CD4-positive, alpha-beta T cell (primary cell): ENCODE measurements at regions of chr20 and their contacts with region 1.

Region 1: DNA sequence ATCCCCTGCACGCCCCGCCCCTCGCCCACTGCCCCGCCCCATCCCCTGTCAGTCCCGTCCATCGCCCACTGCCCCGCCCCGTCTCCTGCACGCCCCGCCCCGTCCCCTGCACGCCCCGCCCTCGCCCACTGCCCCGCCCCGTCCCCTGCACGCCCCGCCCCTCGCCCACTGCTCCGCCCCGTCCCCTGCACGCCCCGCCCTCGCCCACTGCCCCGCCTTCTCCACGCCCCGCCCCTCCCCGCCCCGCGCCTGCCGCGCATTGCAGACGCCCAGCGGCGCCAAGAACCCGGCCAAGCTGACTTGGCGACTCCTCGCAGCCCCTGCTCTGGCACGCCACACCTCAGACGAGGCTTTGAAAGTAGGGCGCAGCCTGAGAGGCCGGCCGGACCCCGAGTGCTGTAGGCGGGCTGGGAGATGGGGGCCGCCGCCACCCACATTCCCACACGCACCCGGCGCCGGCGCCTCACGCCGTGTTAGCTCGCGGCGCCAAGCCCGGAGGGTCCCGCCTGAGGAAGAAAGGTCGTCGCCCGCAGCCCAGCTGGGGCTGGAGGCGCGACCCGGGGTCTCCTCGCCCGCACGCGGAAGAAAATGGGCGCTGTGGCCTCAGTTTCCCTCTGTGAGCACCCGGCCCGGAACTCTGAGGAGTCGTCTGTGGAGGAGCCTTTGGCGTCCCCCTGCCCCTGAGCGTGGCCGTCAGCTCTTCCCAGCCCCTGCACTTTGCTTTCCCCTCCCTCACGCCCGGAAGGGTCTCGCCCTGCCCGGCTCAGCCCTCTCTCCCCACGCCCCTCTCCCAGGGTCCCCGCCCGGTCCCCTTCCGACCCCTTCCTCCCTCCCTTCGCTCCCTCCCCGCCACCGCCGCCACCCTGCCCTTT is at the start of gene RAD21L1:
- DNase-seq: peak; percentile 73 to 92 (median 80)
- ATAC-seq: peak; percentile 80
- H3K4me3 ChIP-seq: peak within 1 kb of the TSS; percentile 77
- H3K4me3 Mint-ChIP-seq: peak within 1 kb of the TSS; percentile 92
- H3K27ac ChIP-seq: peak within 1 kb of the TSS in 1 of 2 donors; percentile 22
- H3K27ac Mint-ChIP-seq: peak within 1 kb of the TSS; percentile 53
- H3K4me1 ChIP-seq: peaks cover 18% of the 10 kb centered on the region
- H3K4me1 Mint-ChIP-seq: peaks cover 19% of the 10 kb centered on the region
- H3K27me3 ChIP-seq: peaks cover 0 to 15% of the 10 kb centered on the region in 2 experiments
- H3K27me3 Mint-ChIP-seq: peaks cover 21% of the 10 kb centered on the region
- CTCF ChIP-seq: no peak
- total RNA-seq, gene RAD21L1: 0.58 TPM in 1 of 2 experiments, not detected in the other

Region 2: GRCh38 chr20:1266167-1266973 is 40.4 kb after region 1 on chr20 and contains the start of gene SNPH:
- CTCF ChIA-PET with region 1: interaction called, 4 read pairs
- POLR2A ChIA-PET with region 1: interaction called, 8 read pairs
- intact Hi-C with region 1: loop called (anchors 1 to 5 kb)
- DNase-seq: peak; percentile 61 to 90 (median 72)
- ATAC-seq: peak; percentile 80
- H3K4me3 ChIP-seq: peak within 1 kb of the TSS; percentile 60
- H3K4me3 Mint-ChIP-seq: peak within 1 kb of the TSS; percentile 90
- H3K27ac ChIP-seq: peak within 1 kb of the TSS; percentile 50 to 72
- H3K27ac Mint-ChIP-seq: peak within 1 kb of the TSS; percentile 90
- H3K4me1 ChIP-seq: peaks cover 35% of the 10 kb centered on the region
- H3K4me1 Mint-ChIP-seq: peaks cover 77% of the 10 kb centered on the region
- H3K27me3 ChIP-seq: no peaks in the 10 kb centered on the region
- H3K27me3 Mint-ChIP-seq: no peaks in the 10 kb centered on the region
- CTCF ChIP-seq: no peak
- total RNA-seq, gene SNPH: 12.8 to 13.0 TPM

Region 3: GRCh38 chr20:1392823-1393506 is 166.9 kb after region 1 on chr20 and contains the start of gene FKBP1A:
- CTCF ChIA-PET with region 1: no interaction called
- POLR2A ChIA-PET with region 1: no interaction called
- intact Hi-C with region 1: loop called in 1 of 2 experiments (anchors 1 kb)
- DNase-seq: peak; percentile 84 to 97 (median 92)
- ATAC-seq: peak; percentile 83
- H3K4me3 ChIP-seq: peak within 1 kb of the TSS; percentile 85
- H3K4me3 Mint-ChIP-seq: peak within 1 kb of the TSS; percentile 98
- H3K27ac ChIP-seq: peak within 1 kb of the TSS; percentile 37 to 72
- H3K27ac Mint-ChIP-seq: peak within 1 kb of the TSS; percentile 89
- H3K4me1 ChIP-seq: peaks cover 60% of the 10 kb centered on the region
- H3K4me1 Mint-ChIP-seq: peaks cover 61% of the 10 kb centered on the region
- H3K27me3 ChIP-seq: no peaks in the 10 kb centered on the region
- H3K27me3 Mint-ChIP-seq: no peaks in the 10 kb centered on the region
- CTCF ChIP-seq: no peak
- total RNA-seq, gene FKBP1A: 43.3 to 45.4 TPM